H1 (cell line): ENCODE measurements at regions of chr16 and their contacts with region 1.

Region 1: DNA sequence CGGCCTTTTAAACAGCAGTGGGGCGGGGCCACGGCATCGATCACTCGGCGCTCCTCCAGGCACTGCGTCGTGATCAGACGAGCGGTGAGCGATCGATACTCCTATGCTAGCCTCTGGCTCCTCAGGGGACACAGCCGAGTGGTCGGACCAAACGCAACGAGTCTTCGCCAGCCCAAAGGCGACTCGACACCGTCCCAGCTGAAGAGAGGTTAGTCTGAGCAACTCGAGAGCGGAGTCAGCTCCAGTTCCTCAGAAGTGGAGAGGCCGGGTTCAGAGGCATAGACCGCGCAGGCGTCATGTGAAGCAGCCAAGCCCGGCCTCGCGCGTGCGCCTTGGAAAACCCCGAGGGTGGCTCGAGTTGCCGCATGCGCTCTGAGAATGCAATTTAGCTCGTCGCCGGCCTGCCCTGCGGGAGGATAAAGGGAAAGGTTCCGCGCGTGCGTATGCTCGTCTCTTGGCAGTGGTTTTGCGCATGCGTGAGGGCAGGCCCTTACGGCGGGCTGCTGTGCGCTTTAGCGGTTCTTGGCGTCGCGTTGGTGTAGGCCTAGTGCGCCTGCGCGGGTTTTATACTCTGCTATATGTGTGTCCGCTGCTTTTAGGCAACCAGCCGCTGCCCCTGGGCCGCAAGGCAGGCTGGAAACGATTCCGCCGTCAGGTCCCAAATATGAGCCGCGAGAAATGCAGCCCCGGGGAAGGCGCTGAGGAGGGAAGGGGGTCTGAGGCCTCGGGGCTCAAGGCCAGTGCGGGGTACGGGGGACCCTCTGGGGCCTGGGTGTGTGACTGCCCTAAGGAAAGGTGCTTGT is at the start of gene KDM8:
- DNase-seq: peak; percentile 94 to 98
- H3K4me3 ChIP-seq: peak within 1 kb of the TSS; percentile 68 to 92 (median 82)
- H3K27ac ChIP-seq: peak within 1 kb of the TSS; percentile 96
- H3K4me1 ChIP-seq: peaks cover 0 to 4% (median 3%) of the 10 kb centered on the region in 4 experiments; a peak in 3 of 7 replicates
- H3K27me3 ChIP-seq: no peaks in the 10 kb centered on the region
- CTCF ChIP-seq: no peak
- EP300 ChIP-seq: no peak
- POLR2A ChIP-seq: peak; percentile 96 to 98
- RAD21 ChIP-seq: no peak
- total RNA-seq, gene KDM8: 10.3 and 14.6 TPM in 2 replicates

Region 2: DNA sequence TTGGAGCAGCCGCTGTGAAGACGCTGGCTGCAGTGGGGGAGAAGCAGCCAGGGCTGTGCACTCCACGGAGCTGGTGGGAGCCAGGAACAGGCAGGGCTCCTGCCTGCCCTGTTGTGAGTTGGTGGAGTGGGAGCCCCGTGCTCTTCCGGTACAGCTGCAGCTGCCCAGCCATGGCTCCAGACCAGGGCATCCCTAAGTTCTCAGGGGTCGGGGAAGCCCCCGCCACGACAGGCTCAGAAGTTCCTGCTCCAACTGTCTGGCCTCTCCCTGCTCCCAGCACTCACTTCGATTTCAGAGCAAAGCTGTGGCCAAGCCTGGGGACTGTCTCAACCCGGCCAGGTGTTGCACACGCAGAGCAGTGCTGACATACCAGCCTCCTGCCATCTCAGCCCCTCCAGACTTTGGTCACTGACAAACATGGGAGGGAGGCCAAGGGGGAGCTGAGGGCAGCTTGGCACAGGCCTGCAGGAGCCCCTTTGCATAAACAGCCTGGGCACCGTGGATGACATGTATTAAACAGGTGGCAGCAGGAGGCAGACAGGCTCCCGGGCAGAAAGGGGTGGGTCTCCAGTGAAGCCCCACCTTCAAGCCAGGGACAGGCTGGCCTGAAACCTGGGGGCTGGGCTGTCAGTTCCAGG is 14.2 kb before region 1 on chr16:
- CTCF ChIA-PET with region 1: interaction called, 3 read pairs
- POLR2A ChIA-PET with region 1: interaction called, 10 read pairs
- DNase-seq: peak in 1 of 2 experiments; percentile 52
- H3K4me3 ChIP-seq: no peak overlapping the region
- H3K27ac ChIP-seq: no peak overlapping the region
- H3K4me1 ChIP-seq: peaks cover 0 to 6% (median 1%) of the 10 kb centered on the region in 4 experiments; a peak in 3 of 7 replicates
- H3K27me3 ChIP-seq: no peaks in the 10 kb centered on the region
- CTCF ChIP-seq: no peak
- EP300 ChIP-seq: no peak
- POLR2A ChIP-seq: no peak
- RAD21 ChIP-seq: no peak

Region 3: GRCh38 chr16:27222249-27223225 is 18.9 kb after region 1 on chr16:
- CTCF ChIA-PET with region 1: interaction called, 3 read pairs
- POLR2A ChIA-PET with region 1: interaction called, 13 read pairs
- DNase-seq: no peak
- H3K4me3 ChIP-seq: no peak overlapping the region
- H3K27ac ChIP-seq: no peak overlapping the region
- H3K4me1 ChIP-seq: 0 out of 7 replicates have a peak, but pooled peaks cover 0 to 2% (median 0%) of the 10 kb centered on the region in 4 experiments
- H3K27me3 ChIP-seq: no peaks in the 10 kb centered on the region
- CTCF ChIP-seq: no peak
- EP300 ChIP-seq: no peak
- POLR2A ChIP-seq: no peak
- RAD21 ChIP-seq: no peak

Region 4: DNA sequence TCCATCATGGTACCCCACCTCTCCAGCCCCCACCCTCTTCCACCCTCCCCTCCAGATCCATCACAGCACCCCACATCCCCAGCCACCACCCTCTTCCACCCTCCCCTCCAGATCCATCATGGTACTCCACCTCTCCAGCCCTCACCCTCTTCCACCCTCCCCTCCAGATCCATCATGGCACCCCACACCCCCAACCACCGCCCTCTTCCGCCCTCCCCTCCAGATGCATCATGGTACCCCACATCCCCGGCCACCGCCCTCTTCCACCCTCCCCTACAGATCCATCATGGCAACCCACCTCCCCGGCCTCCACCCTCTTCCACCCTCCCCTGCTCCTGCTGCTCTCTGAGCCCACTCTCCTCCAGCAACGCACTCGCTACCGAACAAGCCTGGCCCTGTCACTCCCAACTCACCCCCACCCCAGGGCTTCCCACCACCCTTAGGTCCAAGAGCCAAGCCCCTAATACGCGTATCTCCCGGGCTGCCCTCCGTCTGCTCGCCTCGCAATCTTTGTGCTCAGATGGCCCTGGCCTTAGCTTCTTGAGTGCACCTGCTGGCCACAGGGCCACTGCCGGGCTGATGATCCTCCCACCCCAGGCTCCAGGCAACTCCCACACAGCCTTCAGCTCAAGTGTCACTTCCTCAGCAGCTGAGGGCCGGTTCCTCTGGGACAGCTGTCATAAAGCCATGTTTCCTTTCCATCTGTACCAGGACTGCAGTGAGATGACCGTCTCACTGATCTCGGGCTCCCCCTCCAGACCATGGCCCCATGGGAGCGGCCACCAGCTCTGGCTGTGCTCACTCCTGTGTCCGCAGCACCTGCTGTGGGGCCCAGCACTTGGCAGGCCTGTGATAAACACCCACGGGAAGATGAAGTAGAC is 25.2 kb after region 1 on chr16:
- CTCF ChIA-PET with region 1: interaction called, 3 read pairs
- POLR2A ChIA-PET with region 1: interaction called, 13 read pairs
- DNase-seq: no peak
- H3K4me3 ChIP-seq: no peak overlapping the region
- H3K27ac ChIP-seq: no peak overlapping the region
- H3K4me1 ChIP-seq: 0 out of 7 replicates have a peak, but pooled peaks cover 0 to 2% (median 0%) of the 10 kb centered on the region in 4 experiments
- H3K27me3 ChIP-seq: no peaks in the 10 kb centered on the region
- CTCF ChIP-seq: no peak
- EP300 ChIP-seq: no peak
- POLR2A ChIP-seq: no peak
- RAD21 ChIP-seq: no peak

Region 5: DNA sequence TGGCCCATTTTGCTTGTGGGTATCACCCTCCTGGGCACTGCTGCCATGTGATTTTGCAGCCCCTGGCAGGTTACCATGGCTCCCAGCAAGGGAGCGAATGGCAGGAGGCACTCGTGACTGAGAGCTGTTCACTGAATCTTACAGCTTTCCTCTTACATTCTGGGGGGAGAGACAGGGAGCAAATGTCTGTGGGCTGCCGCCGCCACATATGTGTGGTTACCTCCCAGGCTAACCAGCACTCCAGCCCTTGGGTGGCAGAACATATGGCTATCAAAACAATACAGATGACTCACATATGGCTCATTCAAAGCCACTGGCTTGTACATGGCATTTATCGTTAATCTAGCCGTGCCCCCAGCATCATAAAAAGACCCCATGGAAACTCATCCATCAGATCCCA is 326.3 kb after region 1 on chr16:
- CTCF ChIA-PET with region 1: no interaction called
- POLR2A ChIA-PET with region 1: no interaction called
- DNase-seq: no peak
- H3K4me3 ChIP-seq: no peak overlapping the region
- H3K27ac ChIP-seq: no peak overlapping the region
- H3K4me1 ChIP-seq: no peaks in the 10 kb centered on the region
- H3K27me3 ChIP-seq: no peaks in the 10 kb centered on the region
- CTCF ChIP-seq: no peak
- EP300 ChIP-seq: no peak
- POLR2A ChIP-seq: no peak
- RAD21 ChIP-seq: no peak